Natural killer cell (primary cell): ENCODE measurements at regions of chr20 and their contacts with region 1.

Region 1: GRCh38 chr20:34312544-34313217 is 9.5 kb upstream of the AHCY start:
- DNase-seq: peak; percentile 84 to 94
- ATAC-seq: peak; percentile 100
- H3K4me3 ChIP-seq: no peak overlapping the region
- H3K4me3 Mint-ChIP-seq: no peak overlapping the region
- H3K27ac ChIP-seq: no peak overlapping the region
- H3K27ac Mint-ChIP-seq: no peak overlapping the region
- H3K4me1 ChIP-seq: peaks cover 22% of the 10 kb centered on the region
- H3K4me1 Mint-ChIP-seq: peaks cover 13 to 18% of the 10 kb centered on the region in 2 donors
- H3K27me3 ChIP-seq: peaks cover 10% of the 10 kb centered on the region
- H3K27me3 Mint-ChIP-seq: peaks cover 6 to 10% of the 10 kb centered on the region in 2 donors
- CTCF ChIP-seq: peak; percentile 100

Region 2: DNA sequence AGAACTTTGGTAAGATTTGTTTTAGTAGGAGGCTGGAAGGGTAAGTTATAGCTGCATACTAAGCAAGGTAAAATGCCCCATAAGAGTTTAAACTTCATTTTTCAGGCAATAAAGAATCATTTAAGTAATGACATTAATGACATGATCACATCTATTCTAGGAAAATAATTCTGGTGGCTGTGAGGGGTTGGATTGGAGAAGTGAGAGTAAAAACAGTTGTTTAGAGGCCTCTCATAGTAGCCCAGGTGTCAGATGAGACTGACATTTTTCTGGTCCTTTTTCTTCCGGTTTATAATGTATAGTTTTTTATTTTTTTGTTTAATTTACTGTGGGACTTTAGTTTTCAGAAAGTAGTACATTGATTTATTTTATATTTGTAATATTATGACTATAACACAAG is 91.2 kb after region 1 on chr20:
- intact Hi-C with region 1: loop called (anchors 2 kb)
- DNase-seq: no peak
- ATAC-seq: no peak
- H3K4me3 ChIP-seq: no peak overlapping the region
- H3K4me3 Mint-ChIP-seq: peak overlapping the region; percentile 74
- H3K27ac ChIP-seq: peak overlapping the region; percentile 1
- H3K27ac Mint-ChIP-seq: peak overlapping the region; percentile 66 to 84
- H3K4me1 ChIP-seq: peaks cover 27% of the 10 kb centered on the region
- H3K4me1 Mint-ChIP-seq: peaks cover 65 to 66% of the 10 kb centered on the region in 2 donors
- H3K27me3 ChIP-seq: no peaks in the 10 kb centered on the region
- H3K27me3 Mint-ChIP-seq: no peaks in the 10 kb centered on the region
- CTCF ChIP-seq: no peak

Region 3: DNA sequence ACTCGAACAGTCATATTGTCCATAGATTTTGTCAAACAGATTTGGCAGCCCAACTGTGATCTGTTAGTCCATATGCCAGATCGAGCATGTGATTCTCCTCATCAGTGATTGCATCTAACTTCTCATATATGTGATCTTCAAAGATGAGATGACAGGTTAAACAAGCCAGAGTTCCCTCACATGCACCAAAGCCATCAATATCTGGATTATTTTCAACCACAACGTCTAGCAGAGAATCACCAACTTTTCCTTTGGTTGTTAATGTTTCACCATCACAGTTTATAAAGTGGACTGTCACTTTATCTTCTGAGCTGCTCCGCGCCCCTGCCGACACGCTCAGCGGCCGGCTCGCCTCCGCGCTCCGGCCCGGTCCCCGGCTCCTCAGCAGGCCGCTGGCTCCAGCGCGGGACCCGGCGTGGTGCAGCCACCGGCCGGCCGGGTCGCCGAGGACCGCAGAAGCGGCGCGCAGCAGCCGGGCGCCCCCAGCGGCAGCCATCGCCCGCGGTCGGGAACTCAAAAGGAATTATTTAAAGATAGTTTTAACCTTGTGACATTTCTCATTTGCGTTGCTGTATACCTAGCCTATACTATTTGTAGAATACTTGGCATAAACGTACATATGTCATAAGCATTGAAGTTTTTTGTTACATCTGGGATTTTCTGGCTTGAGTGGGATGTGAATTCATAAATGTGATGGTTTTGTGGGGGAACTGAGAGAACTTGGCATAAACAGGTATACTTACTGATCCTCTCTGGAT is 163.5 kb after region 1 on chr20:
- intact Hi-C with region 1: loop called (anchors 1 kb)
- DNase-seq: peak; percentile 43 to 49
- ATAC-seq: peak; percentile 74 to 91 (median 86)
- H3K4me3 ChIP-seq: no peak overlapping the region
- H3K4me3 Mint-ChIP-seq: no peak overlapping the region
- H3K27ac ChIP-seq: no peak overlapping the region
- H3K27ac Mint-ChIP-seq: peak overlapping the region; percentile 74 to 84
- H3K4me1 ChIP-seq: no peaks in the 10 kb centered on the region
- H3K4me1 Mint-ChIP-seq: peaks cover 8 to 23% of the 10 kb centered on the region in 2 donors
- H3K27me3 ChIP-seq: no peaks in the 10 kb centered on the region
- H3K27me3 Mint-ChIP-seq: no peaks in the 10 kb centered on the region
- CTCF ChIP-seq: peak; percentile 74

Region 4: DNA sequence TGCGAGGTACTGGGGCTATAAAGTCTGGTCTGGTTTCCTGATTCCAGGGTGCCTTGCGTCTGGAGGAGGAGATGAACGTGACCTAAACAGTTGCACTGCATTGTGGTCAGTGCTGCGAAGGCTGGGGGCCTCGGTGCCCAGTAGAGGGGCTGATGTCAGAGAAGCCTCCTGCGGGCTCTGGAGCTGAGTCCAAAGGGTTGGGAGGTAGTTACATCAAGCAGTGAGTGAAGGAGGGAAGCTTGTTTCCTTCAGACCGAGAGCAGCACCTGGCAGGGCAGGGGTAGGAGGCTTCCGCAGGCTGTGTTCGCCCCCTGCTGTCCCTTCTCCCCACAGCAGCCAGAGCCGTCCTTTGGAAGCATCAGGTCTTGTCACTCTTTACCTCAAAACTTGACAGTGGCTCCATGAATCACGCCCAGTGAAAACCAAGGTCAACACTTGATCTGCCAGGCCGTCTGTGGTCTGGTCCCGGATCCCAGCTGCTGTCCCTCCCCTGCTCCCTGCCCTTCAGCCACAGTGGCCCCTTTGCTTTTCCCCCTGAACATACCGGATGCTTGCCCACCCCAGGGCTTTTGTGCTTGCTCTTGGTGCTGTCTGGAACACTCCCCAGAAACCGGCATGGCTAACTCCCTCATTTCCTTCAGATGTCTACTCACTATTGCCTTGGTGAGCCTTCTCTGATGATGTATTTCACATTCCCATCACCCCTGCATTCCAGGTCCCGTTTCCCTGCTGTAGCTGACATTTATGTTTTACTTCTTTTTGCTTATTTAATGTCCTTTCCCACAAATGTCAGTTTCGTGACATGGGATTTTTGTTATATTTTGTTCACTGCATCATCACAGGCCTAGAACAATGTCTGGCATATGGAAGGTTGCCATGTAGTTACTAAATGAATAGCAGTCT is 210.5 kb after region 1 on chr20:
- intact Hi-C with region 1: loop called (anchors 1 kb)
- DNase-seq: peak in 1 of 2 donors; percentile 73
- ATAC-seq: peak in 2 of 3 donors; percentile 81 to 84
- H3K4me3 ChIP-seq: no peak overlapping the region
- H3K4me3 Mint-ChIP-seq: no peak overlapping the region
- H3K27ac ChIP-seq: no peak overlapping the region
- H3K27ac Mint-ChIP-seq: peak overlapping the region in 1 of 2 donors; percentile 71
- H3K4me1 ChIP-seq: peaks cover 8% of the 10 kb centered on the region
- H3K4me1 Mint-ChIP-seq: peaks cover 29 to 30% of the 10 kb centered on the region in 2 donors
- H3K27me3 ChIP-seq: no peaks in the 10 kb centered on the region
- H3K27me3 Mint-ChIP-seq: no peaks in the 10 kb centered on the region
- CTCF ChIP-seq: peak; percentile 21

Region 5: GRCh38 chr20:34768096-34768495 is 455.4 kb after region 1 on chr20:
- intact Hi-C with region 1: loop called (anchors 1 kb)
- DNase-seq: no peak
- ATAC-seq: no peak
- H3K4me3 ChIP-seq: no peak overlapping the region
- H3K4me3 Mint-ChIP-seq: no peak overlapping the region
- H3K27ac ChIP-seq: no peak overlapping the region
- H3K27ac Mint-ChIP-seq: no peak overlapping the region
- H3K4me1 ChIP-seq: no peaks in the 10 kb centered on the region
- H3K4me1 Mint-ChIP-seq: no peaks in the 10 kb centered on the region
- H3K27me3 ChIP-seq: no peaks in the 10 kb centered on the region
- H3K27me3 Mint-ChIP-seq: no peaks in the 10 kb centered on the region
- CTCF ChIP-seq: no peak